ENCODE measurements at regions of chr2 and their contacts with region 1.

Region 1: DNA sequence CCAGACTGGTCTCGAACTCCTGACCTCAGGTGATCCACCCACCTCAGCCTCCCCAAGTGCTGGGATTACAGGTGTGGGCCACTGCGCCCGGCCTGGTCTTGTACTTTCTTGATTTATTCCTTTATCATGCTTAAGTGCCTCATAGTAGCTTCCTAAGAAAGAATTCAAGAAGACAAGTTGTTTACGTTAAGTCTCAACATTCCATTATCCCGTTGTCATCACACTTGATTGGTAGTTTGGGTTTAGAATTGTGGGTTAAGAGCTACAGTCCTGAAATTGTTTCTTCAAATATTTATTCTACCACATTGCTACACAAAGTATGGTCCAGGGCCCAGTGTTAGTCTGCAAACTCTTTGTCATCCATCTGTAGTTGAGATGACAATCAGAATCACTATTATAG is 194.0 kb downstream of the VWC2L start:
- DNase-seq: no peak
- H3K4me3 ChIP-seq: no peak overlapping the region
- H3K27ac ChIP-seq: no peak overlapping the region
- H3K4me1 ChIP-seq: no peaks in the 10 kb centered on the region
- H3K27me3 ChIP-seq: no peaks in the 10 kb centered on the region
- CTCF ChIP-seq: no peak

Region 2: GRCh38 chr2:214592011-214592410 is 12.8 kb before region 1 on chr2:
- intact Hi-C with region 1: loop called (anchors 1 kb)
- DNase-seq: no peak
- H3K4me3 ChIP-seq: no peak overlapping the region
- H3K27ac ChIP-seq: no peak overlapping the region
- H3K4me1 ChIP-seq: peaks cover 0 to 15% (median 2%) of the 10 kb centered on the region in 4 donors
- H3K27me3 ChIP-seq: no peaks in the 10 kb centered on the region
- CTCF ChIP-seq: no peak

Measured in tibial artery (tissue), 4 donors.